Cardiac septum (tissue), 1 donor: ENCODE measurements at regions of chr2 and their contacts with region 1.

Region 1: GRCh38 chr2:179218848-179219594 is 45.6 kb downstream of the SESTD1 start:
- DNase-seq: no peak

Region 2: DNA sequence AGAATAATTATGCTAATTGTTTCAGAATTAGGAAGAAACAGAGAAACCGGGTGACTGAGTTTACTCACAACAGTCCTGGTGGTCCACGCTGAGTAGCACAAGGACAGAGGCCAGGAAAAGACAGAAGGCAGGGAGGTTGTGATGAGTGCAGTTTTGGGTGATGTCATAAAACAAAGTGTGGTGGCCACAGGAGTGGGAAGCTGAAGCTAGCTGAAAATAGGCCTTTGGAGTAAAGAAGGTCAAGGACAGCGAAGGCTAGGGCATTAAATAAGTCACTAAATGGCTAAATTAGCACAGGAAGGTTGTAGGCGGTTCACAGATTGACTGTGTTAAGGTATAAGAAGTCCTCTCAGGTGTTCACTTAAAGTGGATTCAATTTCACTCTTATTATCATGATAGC is 290.9 kb before region 1 on chr2:
- intact Hi-C with region 1: no loop called
- DNase-seq: no peak

Region 3: DNA sequence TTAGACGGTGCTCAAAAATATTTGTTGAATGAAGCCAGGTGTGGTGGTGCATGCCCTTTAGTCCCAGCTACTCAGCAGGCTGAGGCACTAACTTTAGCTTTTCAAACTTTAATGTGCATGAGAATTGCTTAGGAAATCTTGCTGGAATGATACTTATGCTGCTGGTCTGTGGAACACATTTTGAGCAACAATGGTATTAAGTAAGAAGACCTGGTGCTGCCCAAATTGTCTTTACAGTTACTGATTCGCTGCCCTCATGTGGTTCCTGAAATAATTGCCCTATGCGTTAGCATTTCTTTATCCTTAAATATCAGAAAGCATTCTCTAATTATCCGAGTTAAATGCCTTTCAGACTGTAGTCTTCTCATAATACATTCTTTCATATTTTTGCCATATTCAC is 121.6 kb after region 1 on chr2:
- intact Hi-C with region 1: loop called (anchors 2 kb)
- DNase-seq: no peak

Region 4: DNA sequence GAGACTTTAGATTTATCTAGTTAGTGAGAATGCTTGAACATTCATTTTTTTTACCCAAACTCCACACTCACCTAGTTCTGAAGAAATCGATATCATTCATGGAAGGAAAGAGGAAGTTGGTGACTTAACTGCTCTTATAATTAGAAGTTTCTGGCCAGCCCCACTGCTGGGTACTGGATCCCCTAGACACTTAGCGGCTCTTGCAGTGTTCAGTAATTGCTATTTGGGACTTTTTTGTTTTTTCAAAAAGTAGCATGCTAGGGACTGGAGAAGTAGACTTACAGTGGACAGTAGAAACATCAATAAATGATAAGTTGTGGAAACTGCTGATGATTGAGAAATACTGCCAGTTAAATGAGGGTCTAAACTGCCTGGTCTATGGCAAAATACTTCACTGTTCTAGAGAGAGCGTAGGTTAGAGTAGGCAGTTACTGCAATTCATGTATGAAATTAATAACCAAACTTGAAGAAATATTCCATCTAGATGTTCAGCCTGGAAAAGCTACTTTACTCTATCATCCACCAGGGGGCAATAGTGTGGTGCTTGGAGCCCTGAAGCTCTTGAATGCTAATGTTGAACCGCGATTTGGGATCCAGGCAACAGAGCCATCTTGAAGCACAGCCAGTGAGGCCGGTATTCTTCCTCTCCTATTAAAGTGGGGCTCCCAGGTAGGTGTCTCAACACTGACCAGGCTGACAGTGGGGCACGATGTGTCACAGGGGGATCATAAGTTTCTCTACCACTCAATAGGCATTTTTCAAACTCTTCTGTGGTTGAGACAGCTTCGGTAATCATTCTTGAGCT is 191.7 kb after region 1 on chr2:
- intact Hi-C with region 1: loop called (anchors 1 kb)
- DNase-seq: no peak